PC-9 (cell line): ENCODE measurements at regions of chr4 and their contacts with region 1.

Region 1: DNA sequence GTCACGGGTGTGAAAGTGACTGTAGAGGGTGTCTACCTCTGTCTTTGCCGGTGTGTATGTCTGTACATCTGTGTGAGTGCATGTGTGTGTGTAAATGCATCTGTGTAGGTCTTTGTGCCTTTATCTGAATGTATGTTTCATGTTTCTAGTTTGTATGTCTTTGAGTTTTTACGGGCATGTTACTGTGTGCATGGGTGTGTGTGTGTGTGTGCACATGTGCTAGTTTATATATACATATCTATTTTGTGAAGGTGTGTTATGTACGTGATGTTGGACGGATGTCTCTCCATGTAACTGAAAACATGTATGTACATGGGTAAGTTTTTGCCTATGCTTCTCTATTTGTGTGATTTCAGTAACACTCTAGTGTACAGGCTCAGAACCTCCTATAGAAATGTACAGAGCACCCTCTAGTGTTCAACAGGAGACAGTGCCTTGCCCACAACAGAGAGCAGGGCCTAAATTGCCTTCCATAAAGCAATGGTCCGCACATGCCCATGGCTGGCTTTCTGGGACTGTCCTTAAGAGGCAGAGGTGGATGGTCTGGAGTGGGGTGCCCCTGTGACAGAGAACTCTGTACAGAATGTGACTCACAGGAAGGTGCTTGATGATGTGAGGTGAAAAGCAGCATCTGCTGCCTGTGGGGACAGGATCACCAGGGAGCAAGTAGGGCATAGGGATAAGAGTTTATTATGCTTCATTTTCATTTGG is 343.5 kb downstream of the RAPGEF2 start:
- DNase-seq: peak; percentile 39 to 49
- H3K4me3 ChIP-seq: no peak overlapping the region
- H3K27ac ChIP-seq: no peak overlapping the region
- H3K4me1 ChIP-seq: no peaks in the 10 kb centered on the region
- H3K27me3 ChIP-seq: no peaks in the 10 kb centered on the region
- CTCF ChIP-seq: peak; percentile 82

Region 2: GRCh38 chr4:158094413-158095134 is 1351.8 kb before region 1 on chr4:
- CTCF ChIA-PET with region 1: no interaction called
- POLR2A ChIA-PET with region 1: no interaction called
- intact Hi-C with region 1: no loop called
- DNase-seq: peak; percentile 90 to 92
- H3K4me3 ChIP-seq: peak overlapping the region; percentile 44; the same call in 1 of the 2 replicates
- H3K27ac ChIP-seq: peak overlapping the region; percentile 94
- H3K4me1 ChIP-seq: peaks cover 36% of the 10 kb centered on the region
- H3K27me3 ChIP-seq: no peaks in the 10 kb centered on the region
- CTCF ChIP-seq: no peak

Region 3: DNA sequence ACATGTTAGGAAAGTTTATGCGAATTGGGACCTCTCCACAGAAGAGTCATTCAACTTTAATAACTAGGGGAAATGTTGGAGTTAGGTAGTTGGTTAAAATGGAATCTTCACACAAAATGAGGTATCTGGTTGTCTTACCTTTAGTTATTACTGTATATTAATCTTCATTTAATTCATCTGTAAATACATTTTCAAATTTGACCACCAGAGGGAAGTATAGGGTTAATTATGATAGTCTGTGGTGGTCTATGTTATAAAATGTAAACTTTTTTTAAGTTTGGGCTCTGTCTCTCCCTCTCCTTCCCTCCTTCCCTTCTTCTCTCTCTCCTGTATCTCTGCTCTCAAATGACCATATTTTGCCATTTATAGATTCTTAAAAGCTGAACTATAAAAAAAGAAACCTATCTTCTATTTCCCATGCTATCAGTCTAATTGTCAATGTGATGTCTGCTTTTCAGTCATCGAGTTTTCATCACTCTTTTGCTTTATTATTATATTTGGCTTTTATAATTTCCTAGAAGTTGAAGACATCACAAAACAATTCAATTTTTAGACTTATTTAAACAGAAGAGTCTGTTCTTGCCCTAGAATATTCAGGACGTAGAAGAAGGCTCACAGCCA is 1186.4 kb before region 1 on chr4:
- CTCF ChIA-PET with region 1: no interaction called
- POLR2A ChIA-PET with region 1: no interaction called
- intact Hi-C with region 1: loop called (anchors 1 kb)
- DNase-seq: no peak
- H3K4me3 ChIP-seq: no peak overlapping the region
- H3K27ac ChIP-seq: no peak overlapping the region
- H3K4me1 ChIP-seq: no peaks in the 10 kb centered on the region
- H3K27me3 ChIP-seq: no peaks in the 10 kb centered on the region
- CTCF ChIP-seq: peak; percentile 70

Region 4: GRCh38 chr4:158856852-158857251 is 589.6 kb before region 1 on chr4:
- CTCF ChIA-PET with region 1: no interaction called
- POLR2A ChIA-PET with region 1: no interaction called
- intact Hi-C with region 1: loop called (anchors 1 kb)
- DNase-seq: peak in 1 of 2 experiments; percentile 52
- H3K4me3 ChIP-seq: no peak overlapping the region
- H3K27ac ChIP-seq: no peak overlapping the region
- H3K4me1 ChIP-seq: no peaks in the 10 kb centered on the region
- H3K27me3 ChIP-seq: no peaks in the 10 kb centered on the region
- CTCF ChIP-seq: peak; percentile 73

Region 5: DNA sequence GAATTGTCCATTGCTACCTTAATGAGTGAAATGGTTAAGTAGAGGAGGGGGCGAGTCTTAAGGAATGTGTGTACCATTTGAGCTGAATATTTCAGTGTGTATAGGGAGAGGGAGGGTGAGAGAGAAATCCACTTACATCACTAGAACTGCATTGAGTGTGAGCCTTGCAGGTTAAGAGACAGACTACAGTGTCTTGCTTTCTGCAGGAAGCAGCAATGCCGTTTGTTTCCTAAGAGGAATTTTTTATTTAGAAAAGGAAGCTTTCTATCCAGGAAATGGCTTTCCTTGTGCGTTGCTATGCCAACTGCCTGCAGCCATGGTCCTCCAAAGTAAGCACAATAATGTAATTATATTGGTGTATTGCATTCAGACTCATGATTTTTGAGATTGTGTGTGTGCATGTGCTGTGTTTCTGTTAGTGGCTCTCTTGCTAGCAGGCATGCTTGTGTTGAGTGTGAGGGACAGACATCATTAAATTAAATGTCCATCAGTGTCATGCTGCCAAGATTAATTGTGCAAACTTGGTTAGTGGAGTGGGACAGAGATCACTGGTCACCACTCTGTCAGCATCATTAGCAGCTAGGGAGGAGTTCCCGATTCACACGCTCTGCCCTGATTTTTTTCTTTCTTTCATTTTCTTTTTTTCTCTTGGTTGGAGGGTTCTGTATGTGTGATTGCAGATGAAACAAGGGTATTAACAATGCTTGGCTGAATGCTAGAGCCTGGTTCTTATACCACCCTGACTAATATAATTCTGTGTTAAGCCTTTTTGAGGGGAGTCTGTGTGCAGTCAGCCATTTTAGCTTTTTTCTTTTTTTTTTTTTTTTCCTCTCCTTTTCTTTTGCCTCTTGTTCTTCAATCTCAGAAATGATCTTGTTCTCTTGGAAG is 179.2 kb before region 1 on chr4:
- CTCF ChIA-PET with region 1: no interaction called
- POLR2A ChIA-PET with region 1: no interaction called
- intact Hi-C with region 1: no loop called
- DNase-seq: no peak
- H3K4me3 ChIP-seq: no peak overlapping the region
- H3K27ac ChIP-seq: no peak overlapping the region
- H3K4me1 ChIP-seq: 0 out of 2 replicates have a peak, but pooled peaks cover under 1% of the 10 kb centered on the region
- H3K27me3 ChIP-seq: no peaks in the 10 kb centered on the region
- CTCF ChIP-seq: no peak

Region 6: DNA sequence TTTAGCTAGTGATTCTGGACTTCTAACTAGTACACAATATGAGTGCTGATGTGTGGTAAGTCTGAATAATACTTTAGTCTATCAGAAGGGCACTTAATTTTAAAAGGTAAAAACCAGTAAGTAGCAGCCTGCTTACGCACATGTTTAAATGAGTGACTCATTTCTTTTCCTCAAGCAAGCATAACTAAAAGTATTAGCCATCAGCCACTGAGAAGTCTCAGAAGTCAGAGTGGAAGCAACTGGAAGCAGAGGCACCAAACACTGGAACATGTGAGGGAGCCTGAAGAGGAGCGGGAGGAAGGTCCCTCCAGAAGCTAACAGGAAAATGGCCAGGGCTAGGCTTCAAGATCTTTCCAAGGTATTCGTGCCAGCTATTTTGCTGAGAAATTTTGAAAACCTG is 85.9 kb before region 1 on chr4:
- CTCF ChIA-PET with region 1: no interaction called
- POLR2A ChIA-PET with region 1: no interaction called
- intact Hi-C with region 1: loop called (anchors 10 kb)
- DNase-seq: no peak
- H3K4me3 ChIP-seq: no peak overlapping the region
- H3K27ac ChIP-seq: no peak overlapping the region
- H3K4me1 ChIP-seq: no peaks in the 10 kb centered on the region
- H3K27me3 ChIP-seq: no peaks in the 10 kb centered on the region
- CTCF ChIP-seq: no peak

Region 7: GRCh38 chr4:159778298-159778697 is 331.9 kb after region 1 on chr4:
- CTCF ChIA-PET with region 1: no interaction called
- POLR2A ChIA-PET with region 1: no interaction called
- intact Hi-C with region 1: no loop called
- DNase-seq: no peak
- H3K4me3 ChIP-seq: no peak overlapping the region
- H3K27ac ChIP-seq: no peak overlapping the region
- H3K4me1 ChIP-seq: no peaks in the 10 kb centered on the region
- H3K27me3 ChIP-seq: no peaks in the 10 kb centered on the region
- CTCF ChIP-seq: no peak